CD4-positive, alpha-beta memory T cell (primary cell): ENCODE measurements at regions of chr9 and their contacts with region 1.

Region 1: GRCh38 chr9:98796364-98797101 is at the start of gene ANKS6:
- DNase-seq: peak; percentile 63 to 88 (median 83)
- H3K4me3 ChIP-seq: peak within 1 kb of the TSS; percentile 42 to 67
- H3K4me3 Mint-ChIP-seq: peak within 1 kb of the TSS; percentile 84 to 91 (median 89)
- H3K27ac ChIP-seq: peak within 1 kb of the TSS; percentile 43
- H3K27ac Mint-ChIP-seq: peak within 1 kb of the TSS; percentile 43 to 84 (median 79)
- H3K4me1 ChIP-seq: peaks cover 17% of the 10 kb centered on the region
- H3K4me1 Mint-ChIP-seq: peaks cover 23 to 48% (median 31%) of the 10 kb centered on the region in 4 donors
- H3K27me3 ChIP-seq: no peaks in the 10 kb centered on the region
- H3K27me3 Mint-ChIP-seq: peaks cover 0 to under 1% of the 10 kb centered on the region in 2 donors
- total RNA-seq, gene ANKS6: 10.1 to 12.2 TPM

Region 2: GRCh38 chr9:97696803-97697601 is 1099.5 kb before region 1 on chr9 and contains the start of gene XPA:
- CTCF ChIA-PET with region 1: no interaction called
- POLR2A ChIA-PET with region 1: no interaction called
- intact Hi-C with region 1: loop called (anchors 10 kb)
- DNase-seq: peak; percentile 96 to 97 (median 96)
- H3K4me3 ChIP-seq: peak within 1 kb of the TSS; percentile 4 to 82
- H3K4me3 Mint-ChIP-seq: peak within 1 kb of the TSS; percentile 86 to 96 (median 92)
- H3K27ac ChIP-seq: peak within 1 kb of the TSS; percentile 68
- H3K27ac Mint-ChIP-seq: peak within 1 kb of the TSS; percentile 86 to 98 (median 96)
- H3K4me1 ChIP-seq: peaks cover 44% of the 10 kb centered on the region
- H3K4me1 Mint-ChIP-seq: peaks cover 41 to 56% (median 49%) of the 10 kb centered on the region in 4 donors
- H3K27me3 ChIP-seq: no peaks in the 10 kb centered on the region
- H3K27me3 Mint-ChIP-seq: no peaks in the 10 kb centered on the region
- total RNA-seq, gene XPA: 24.0 to 25.5 TPM

Region 3: GRCh38 chr9:98807070-98807810 is 10.7 kb after region 1 on chr9 and contains the start of gene GALNT12:
- CTCF ChIA-PET with region 1: interaction called, 12 read pairs
- POLR2A ChIA-PET with region 1: interaction called, 23 read pairs
- intact Hi-C with region 1: loop called (anchors 1 kb)
- DNase-seq: peak; percentile 37 to 52 (median 46)
- H3K4me3 ChIP-seq: peak within 1 kb of the TSS in 1 of 2 donors; percentile 39
- H3K4me3 Mint-ChIP-seq: peak within 1 kb of the TSS; percentile 88 to 93 (median 89)
- H3K27ac ChIP-seq: no peak within 1 kb of the TSS
- H3K27ac Mint-ChIP-seq: peak within 1 kb of the TSS in 5 of 7 donors; percentile 42 to 76 (median 59)
- H3K4me1 ChIP-seq: peaks cover 17% of the 10 kb centered on the region
- H3K4me1 Mint-ChIP-seq: peaks cover 16 to 29% (median 26%) of the 10 kb centered on the region in 4 donors
- H3K27me3 ChIP-seq: no peaks in the 10 kb centered on the region
- H3K27me3 Mint-ChIP-seq: peaks cover 3 to 4% of the 10 kb centered on the region in 2 donors
- total RNA-seq, gene GALNT12: 11.1 to 13.8 TPM